HCT116 (cell line): ENCODE measurements at regions of chr4 and their contacts with region 1.

Region 1: DNA sequence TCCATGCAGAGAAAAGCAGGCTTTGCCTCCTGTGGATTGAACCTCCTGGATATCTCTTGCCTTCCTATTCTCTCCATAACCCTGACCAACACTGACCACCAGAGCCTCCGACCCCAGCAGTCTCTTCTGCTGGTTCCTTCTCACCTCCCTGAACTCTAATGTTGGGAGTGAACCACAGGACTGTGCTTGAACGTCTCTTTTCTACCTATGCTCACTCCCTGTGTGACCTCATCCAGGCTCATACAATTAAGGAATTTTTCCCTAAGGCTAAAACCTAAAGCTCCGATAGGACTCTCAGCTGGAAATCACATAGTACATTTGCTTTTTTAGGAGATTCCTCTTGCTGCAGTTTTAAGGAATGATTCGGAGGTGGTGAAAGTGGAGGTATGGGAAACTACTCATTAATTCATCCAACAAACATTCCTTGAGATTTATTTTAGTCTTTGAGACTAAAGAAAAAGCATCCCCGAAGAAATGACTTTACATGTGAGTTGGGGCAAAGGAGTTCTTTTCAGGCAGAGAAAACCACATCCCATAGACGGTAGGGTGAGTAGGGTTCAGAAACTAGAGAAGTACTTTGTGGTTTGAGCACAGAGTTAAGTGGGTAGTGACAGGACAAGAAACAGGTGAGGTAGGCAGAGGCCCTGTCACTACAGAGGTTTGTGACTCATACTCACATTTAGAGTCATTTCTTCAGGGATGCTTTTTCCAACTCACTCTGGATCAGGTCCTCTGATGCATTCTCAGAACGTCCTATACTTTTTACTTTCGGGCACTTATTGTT is 30.8 kb downstream of the NDNF start:
- DNase-seq: no peak
- ATAC-seq: no peak
- H3K4me3 ChIP-seq: no peak overlapping the region
- H3K27ac ChIP-seq: no peak overlapping the region
- H3K4me1 ChIP-seq: no peaks in the 10 kb centered on the region
- H3K27me3 ChIP-seq: no peaks in the 10 kb centered on the region
- CTCF ChIP-seq: no peak
- POLR2A ChIP-seq: no peak
- RAD21 ChIP-seq: no peak

Region 2: DNA sequence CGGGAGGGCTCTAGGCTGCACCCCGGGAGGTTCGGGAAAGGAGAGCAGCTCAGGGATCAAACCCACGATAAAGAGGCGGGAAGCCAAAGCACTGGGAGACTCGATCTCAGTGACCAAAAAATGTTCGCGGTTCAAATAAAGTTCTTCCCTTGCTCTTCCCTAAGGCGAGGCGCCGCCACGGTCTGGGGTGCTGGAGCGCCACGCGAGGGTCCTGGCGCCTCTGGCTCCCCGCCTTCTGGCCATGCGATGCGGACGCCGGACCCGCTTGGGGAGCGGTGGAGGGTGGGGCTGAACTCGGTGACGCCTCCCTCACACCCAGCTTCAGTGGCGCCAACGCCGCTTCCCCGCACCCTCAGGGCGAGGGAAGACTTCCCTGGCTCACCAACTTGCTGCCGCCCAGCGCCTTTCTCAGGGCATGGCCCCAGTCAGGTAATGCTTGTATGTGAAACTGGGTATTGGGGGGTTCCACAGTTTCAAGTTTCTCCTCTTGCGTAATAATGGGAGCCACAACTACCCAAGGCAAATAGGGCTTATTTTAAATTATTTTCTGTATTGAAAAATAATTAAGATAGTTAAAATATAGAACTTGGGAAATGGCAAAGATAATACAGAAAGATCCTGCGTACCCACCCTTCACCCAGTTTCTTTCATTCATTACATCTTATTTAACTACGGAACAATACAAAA is 339.4 kb after region 1 on chr4 and contains the start of gene QRFPR:
- CTCF ChIA-PET with region 1: no interaction called
- POLR2A ChIA-PET with region 1: no interaction called
- RAD21 ChIA-PET with region 1: no interaction called
- intact Hi-C with region 1: no loop called
- DNase-seq: no peak
- ATAC-seq: no peak
- H3K4me3 ChIP-seq: no peak within 1 kb of the TSS
- H3K27ac ChIP-seq: no peak within 1 kb of the TSS
- H3K4me1 ChIP-seq: peaks cover 2 to 12% of the 10 kb centered on the region in 2 experiments; a peak in 3 of 4 replicates
- H3K27me3 ChIP-seq: no peaks in the 10 kb centered on the region
- CTCF ChIP-seq: no peak
- POLR2A ChIP-seq: no peak
- RAD21 ChIP-seq: no peak
- total RNA-seq, gene QRFPR: not detected

Region 3: GRCh38 chr4:122873821-122874593 is 1832.5 kb after region 1 on chr4:
- CTCF ChIA-PET with region 1: no interaction called
- POLR2A ChIA-PET with region 1: no interaction called
- RAD21 ChIA-PET with region 1: no interaction called
- intact Hi-C with region 1: loop called (anchors 5 kb)
- DNase-seq: no peak
- ATAC-seq: no peak; the same call in 1 of the 2 replicates
- H3K4me3 ChIP-seq: no peak overlapping the region
- H3K27ac ChIP-seq: no peak overlapping the region
- H3K4me1 ChIP-seq: peaks cover 0 to 11% of the 10 kb centered on the region in 2 experiments; a peak in 2 of 4 replicates
- H3K27me3 ChIP-seq: no peaks in the 10 kb centered on the region
- CTCF ChIP-seq: no peak
- POLR2A ChIP-seq: no peak
- RAD21 ChIP-seq: no peak